T-cell (primary cell): ENCODE measurements at regions of chr4 and their contacts with region 1.

Region 1: DNA sequence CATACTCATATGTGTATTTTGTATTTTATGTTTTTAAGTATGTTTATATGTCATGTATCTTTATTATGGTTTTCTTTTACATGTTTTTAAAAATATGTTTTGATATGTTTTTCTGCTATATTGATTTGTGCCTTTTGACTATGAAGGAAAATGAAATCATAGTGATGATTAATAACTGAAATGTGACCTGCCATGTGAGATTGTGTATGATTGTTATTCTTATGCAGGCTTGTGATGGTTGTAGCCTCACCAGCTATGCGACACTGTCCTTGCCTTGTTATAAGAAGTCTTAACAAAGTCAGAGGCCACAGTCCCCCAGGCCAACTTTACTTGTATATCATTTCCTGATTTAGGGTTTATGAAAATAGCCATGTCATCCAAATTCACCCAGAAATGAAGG is 83.2 kb downstream of the TMEM131L start:
- DNase-seq: no peak
- ATAC-seq: no peak
- H3K4me3 ChIP-seq: no peak overlapping the region
- H3K4me3 Mint-ChIP-seq: no peak overlapping the region
- H3K27ac ChIP-seq: no peak overlapping the region
- H3K27ac Mint-ChIP-seq: peak overlapping the region in 1 of 2 donors; percentile 27
- H3K4me1 ChIP-seq: peaks cover 2 to 28% of the 10 kb centered on the region in 2 experiments
- H3K4me1 Mint-ChIP-seq: peaks cover 53 to 59% (median 59%) of the 10 kb centered on the region in 3 donors
- H3K27me3 ChIP-seq: no peaks in the 10 kb centered on the region
- H3K27me3 Mint-ChIP-seq: no peaks in the 10 kb centered on the region

Region 2: GRCh38 chr4:153318696-153319320 is 230.6 kb before region 1 on chr4:
- CTCF ChIA-PET with region 1: no interaction called
- POLR2A ChIA-PET with region 1: interaction called in 1 of 2 experiments, 11 read pairs
- DNase-seq: peak in 11 of 35 experiments; percentile 2 to 59 (median 8)
- ATAC-seq: peak in 3 of 4 experiments; percentile 40 to 42 (median 41)
- H3K4me3 ChIP-seq: no peak overlapping the region
- H3K4me3 Mint-ChIP-seq: no peak overlapping the region
- H3K27ac ChIP-seq: no peak overlapping the region
- H3K27ac Mint-ChIP-seq: no peak overlapping the region
- H3K4me1 ChIP-seq: no peaks in the 10 kb centered on the region
- H3K4me1 Mint-ChIP-seq: no peaks in the 10 kb centered on the region
- H3K27me3 ChIP-seq: no peaks in the 10 kb centered on the region
- H3K27me3 Mint-ChIP-seq: peaks cover 0 to 7% of the 10 kb centered on the region in 2 donors

Region 3: DNA sequence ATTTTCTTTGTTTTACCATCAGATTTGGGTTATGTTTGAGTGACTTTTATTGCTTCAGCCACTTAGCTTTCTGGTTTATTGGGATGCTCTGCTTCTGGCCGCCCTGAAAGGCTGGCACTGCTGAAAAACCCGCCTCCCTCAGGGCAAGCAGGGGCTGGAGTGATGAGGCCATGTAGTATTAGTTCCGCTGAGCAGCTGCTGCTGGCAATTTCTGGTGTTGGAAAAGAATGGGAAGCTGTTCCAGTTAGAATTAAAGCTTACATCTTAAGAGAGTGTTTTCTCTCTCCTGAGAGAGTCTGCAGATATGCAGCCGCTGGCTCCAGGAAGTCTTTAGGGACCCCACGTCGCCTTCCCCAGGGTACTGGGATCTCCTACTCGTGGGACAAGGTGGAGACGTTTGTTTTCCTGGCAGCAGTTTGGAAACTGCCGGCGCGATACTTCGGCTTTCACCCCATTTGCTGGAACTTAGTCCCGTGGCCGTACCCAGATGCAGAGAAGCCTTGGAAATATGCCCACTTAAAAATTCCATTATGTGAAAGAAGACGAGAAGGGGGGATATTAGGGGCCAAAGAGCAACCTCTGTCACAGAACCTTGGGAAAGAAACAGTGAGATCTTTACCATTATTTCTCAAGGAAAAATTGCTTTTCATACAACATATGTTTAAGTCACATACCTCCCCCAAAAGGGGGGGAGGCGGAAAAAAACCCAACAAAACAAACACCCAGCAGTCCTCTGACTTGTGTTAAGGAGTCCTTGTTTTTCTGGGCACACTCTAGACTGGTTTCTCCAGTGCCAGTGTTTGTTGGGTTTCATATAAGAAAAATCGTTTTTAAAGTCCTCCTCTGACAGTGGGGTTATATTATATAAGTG is 10.7 kb before region 1 on chr4:
- CTCF ChIA-PET with region 1: interaction called, 4 to 11 read pairs
- POLR2A ChIA-PET with region 1: interaction called, 3 to 5 read pairs
- DNase-seq: no peak
- ATAC-seq: no peak
- H3K4me3 ChIP-seq: no peak overlapping the region
- H3K4me3 Mint-ChIP-seq: peak overlapping the region in 1 of 3 donors; percentile 49
- H3K27ac ChIP-seq: no peak overlapping the region
- H3K27ac Mint-ChIP-seq: peak overlapping the region; percentile 38 to 88
- H3K4me1 ChIP-seq: peaks cover 43 to 72% of the 10 kb centered on the region in 2 experiments
- H3K4me1 Mint-ChIP-seq: peaks cover 87 to 96% (median 95%) of the 10 kb centered on the region in 3 donors
- H3K27me3 ChIP-seq: no peaks in the 10 kb centered on the region
- H3K27me3 Mint-ChIP-seq: no peaks in the 10 kb centered on the region